ENCODE measurements at regions of chr7 and their contacts with region 1.

Region 1: DNA sequence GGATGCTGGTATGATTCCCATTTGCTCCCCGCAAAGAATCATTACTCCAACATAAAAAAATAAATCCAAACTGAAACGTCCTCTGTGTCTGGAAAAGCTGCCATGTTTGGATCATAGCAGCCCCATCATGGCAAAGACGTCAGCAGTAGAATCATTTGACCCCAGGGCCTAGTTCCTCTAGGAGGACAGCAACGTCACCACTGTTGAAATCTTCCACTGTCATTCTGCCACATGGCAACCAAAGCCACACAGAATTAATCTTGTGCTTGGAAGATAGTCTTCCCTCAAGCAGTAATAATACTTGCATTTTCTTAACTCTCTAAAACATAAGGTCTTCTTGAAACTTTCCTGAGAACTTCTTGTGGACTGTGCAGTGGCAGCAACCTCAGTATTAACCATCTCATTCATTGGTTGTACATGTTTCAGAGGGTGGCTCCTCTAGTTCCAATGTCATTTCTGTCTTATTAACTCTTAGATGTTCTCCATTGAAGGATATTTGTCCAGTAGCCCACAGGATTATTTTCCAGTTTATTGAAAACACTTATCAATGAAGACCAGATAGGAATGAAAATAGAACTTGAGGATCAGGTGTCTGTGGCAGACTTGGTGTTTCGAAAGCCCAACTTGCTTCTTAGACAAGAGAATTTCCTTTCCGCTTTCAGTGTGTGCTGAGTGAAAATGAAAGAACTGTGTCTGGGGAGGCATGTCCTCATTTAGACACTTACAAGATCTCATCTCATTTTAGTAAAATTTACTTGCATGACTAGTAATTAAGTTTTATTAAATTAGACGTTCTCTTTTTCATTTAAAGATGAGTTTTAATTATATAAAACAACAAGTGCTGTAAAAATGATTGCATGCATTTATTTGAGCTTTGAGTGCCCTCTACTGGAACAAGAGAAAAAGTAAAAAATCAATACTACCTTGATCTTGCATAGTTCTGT is 28.9 kb upstream of the INHBA start:
- DNase-seq: no peak
- H3K4me3 ChIP-seq: peak overlapping the region in 2 of 59 donors; percentile 8 to 14
- H3K27ac ChIP-seq: peak overlapping the region in 13 of 59 donors; percentile 2 to 49 (median 30)
- H3K27me3 ChIP-seq: peaks cover 0 to 7% (median 0%) of the 10 kb centered on the region in 45 donors
- CTCF ChIP-seq: peak; percentile 31 to 78 (median 54)

Region 2: GRCh38 chr7:40232242-40232893 is 1499.4 kb before region 1 on chr7:
- intact Hi-C with region 1: loop called in 1 of 2 experiments (anchors 5 kb)
- DNase-seq: peak in 1 of 10 donors; percentile 22
- H3K4me3 ChIP-seq: no peak overlapping the region
- H3K27ac ChIP-seq: no peak overlapping the region
- H3K27me3 ChIP-seq: no peaks in the 10 kb centered on the region
- CTCF ChIP-seq: peak; percentile 18 to 82 (median 58)

Region 3: GRCh38 chr7:41599760-41600159 is 132.0 kb before region 1 on chr7:
- intact Hi-C with region 1: no loop called
- DNase-seq: no peak
- H3K4me3 ChIP-seq: no peak overlapping the region
- H3K27ac ChIP-seq: no peak overlapping the region
- H3K27me3 ChIP-seq: no peaks in the 10 kb centered on the region
- CTCF ChIP-seq: no peak